ENCODE measurements at regions of chr1 and their contacts with region 1.

Region 1: GRCh38 chr1:11629184-11630016 is 24.8 kb downstream of the FBXO2 start:
- DNase-seq: no peak
- H3K4me3 ChIP-seq: no peak overlapping the region
- H3K27ac ChIP-seq: no peak overlapping the region
- H3K27me3 ChIP-seq: peaks cover 0 to 18% (median 0%) of the 10 kb centered on the region in 45 donors
- CTCF ChIP-seq: no peak

Region 2: GRCh38 chr1:10932088-10932487 is 697.3 kb before region 1 on chr1:
- intact Hi-C with region 1: no loop called
- DNase-seq: no peak
- H3K4me3 ChIP-seq: no peak overlapping the region
- H3K27ac ChIP-seq: no peak overlapping the region
- H3K27me3 ChIP-seq: peaks cover 0 to 3% (median 0%) of the 10 kb centered on the region in 45 donors
- CTCF ChIP-seq: no peak

Region 3: DNA sequence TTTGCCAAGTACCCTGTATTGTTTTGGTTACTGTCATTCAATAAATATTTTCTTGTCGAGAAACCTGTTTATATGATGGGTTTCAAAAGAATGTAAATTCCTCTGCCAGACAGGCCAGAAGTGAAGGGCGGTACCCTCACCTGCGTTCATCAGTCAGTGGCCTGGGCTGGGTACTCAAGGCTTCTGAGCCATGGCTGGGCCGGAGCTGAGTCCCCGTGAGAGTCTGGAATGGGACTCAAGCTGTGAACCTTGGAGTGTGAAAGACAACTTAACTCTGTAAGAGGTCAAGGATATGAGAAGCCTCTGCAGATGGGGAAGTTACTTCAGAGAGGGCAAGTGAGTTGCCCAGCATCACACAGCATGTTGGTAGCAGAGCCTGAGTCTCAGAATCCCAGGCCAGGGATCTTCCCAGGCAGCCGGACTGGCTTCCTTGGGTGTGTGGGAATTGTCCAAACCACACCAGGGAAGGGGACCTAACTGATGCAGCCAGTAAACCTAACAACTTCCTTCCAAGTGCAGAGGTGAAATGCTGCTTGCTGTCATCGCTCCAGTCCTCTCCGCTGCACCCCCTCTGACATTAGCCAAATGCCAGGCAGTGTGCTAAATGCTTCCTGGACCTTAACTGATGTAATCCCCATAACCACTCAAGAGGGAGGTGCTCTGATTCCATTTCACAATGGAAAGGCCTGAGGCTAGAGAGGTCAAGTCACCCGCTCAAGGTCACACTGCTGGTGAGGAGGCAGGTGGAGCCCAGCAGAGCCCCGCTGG is 145.7 kb before region 1 on chr1:
- intact Hi-C with region 1: loop called in 1 of 2 experiments (anchors 10 kb)
- DNase-seq: no peak
- H3K4me3 ChIP-seq: no peak overlapping the region
- H3K27ac ChIP-seq: no peak overlapping the region
- H3K27me3 ChIP-seq: peaks cover 0 to 37% (median 0%) of the 10 kb centered on the region in 45 donors
- CTCF ChIP-seq: no peak

Measured in dorsolateral prefrontal cortex (tissue), 120 donors.